OCI-LY7 (cell line): ENCODE measurements at regions of chr18 and their contacts with region 1.

Region 1: GRCh38 chr18:26840965-26841364 is 24.5 kb downstream of the AQP4 start:
- DNase-seq: no peak
- H3K4me3 ChIP-seq: no peak overlapping the region
- H3K27ac ChIP-seq: no peak overlapping the region
- H3K4me1 ChIP-seq: no peaks in the 10 kb centered on the region
- CTCF ChIP-seq: no peak

Region 2: DNA sequence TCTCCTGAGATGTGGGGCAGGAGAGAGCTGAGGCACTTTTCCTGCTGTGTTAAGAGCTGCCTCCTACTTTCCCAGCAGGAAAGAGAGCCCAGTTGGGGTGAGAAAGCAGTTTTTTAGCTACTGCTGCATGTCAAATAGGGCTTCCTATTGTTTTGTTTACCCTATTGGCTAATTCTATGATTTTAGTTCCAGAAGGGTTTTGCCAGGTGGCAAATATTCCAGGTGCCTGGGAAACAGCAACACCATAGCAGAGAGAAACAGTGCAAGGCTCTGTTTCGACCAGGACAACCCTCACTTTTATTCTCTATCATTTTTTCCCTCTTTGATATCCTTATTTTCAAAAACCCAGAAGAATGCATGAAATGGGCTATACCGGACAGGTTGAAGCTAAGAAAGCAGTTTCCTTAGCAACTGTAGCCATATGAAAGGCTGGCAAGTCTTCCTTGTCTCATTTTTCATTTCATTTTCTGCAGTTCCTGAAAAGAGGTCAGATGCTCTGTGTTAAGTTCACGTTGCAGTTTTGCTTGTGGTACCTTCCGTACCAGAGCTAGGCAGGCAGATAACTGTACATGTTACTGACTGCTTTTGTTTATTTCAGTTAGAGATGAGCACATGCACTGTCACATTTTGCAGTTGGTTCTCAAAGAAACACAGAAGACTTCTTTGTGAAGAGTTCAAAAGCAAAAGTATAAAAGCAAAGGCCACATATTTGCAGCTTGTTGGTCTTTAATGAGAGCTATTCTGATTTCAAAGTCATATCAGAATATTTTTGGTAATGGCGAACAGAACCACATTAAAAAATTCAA is 60.2 kb before region 1 on chr18:
- CTCF ChIA-PET with region 1: no interaction called
- POLR2A ChIA-PET with region 1: no interaction called
- intact Hi-C with region 1: no loop called
- DNase-seq: no peak
- H3K4me3 ChIP-seq: no peak overlapping the region
- H3K27ac ChIP-seq: no peak overlapping the region
- H3K4me1 ChIP-seq: no peaks in the 10 kb centered on the region
- CTCF ChIP-seq: no peak

Region 3: GRCh38 chr18:26804519-26804918 is 36.4 kb before region 1 on chr18:
- CTCF ChIA-PET with region 1: no interaction called
- POLR2A ChIA-PET with region 1: interaction called, 10 read pairs
- intact Hi-C with region 1: no loop called
- DNase-seq: no peak
- H3K4me3 ChIP-seq: no peak overlapping the region
- H3K27ac ChIP-seq: no peak overlapping the region
- H3K4me1 ChIP-seq: no peaks in the 10 kb centered on the region
- CTCF ChIP-seq: peak; percentile 57

Region 4: GRCh38 chr18:27057519-27058234 is 216.7 kb after region 1 on chr18:
- CTCF ChIA-PET with region 1: no interaction called
- POLR2A ChIA-PET with region 1: no interaction called
- intact Hi-C with region 1: no loop called
- DNase-seq: no peak
- H3K4me3 ChIP-seq: no peak overlapping the region
- H3K27ac ChIP-seq: no peak overlapping the region
- H3K4me1 ChIP-seq: no peaks in the 10 kb centered on the region
- CTCF ChIP-seq: no peak